HCT116 (cell line): ENCODE measurements at regions of chr2 and their contacts with region 1.

Region 1: GRCh38 chr2:27683390-27684071 is 19.8 kb downstream of the SLC4A1AP start:
- DNase-seq: peak; percentile 96
- ATAC-seq: peak; percentile 86
- H3K4me3 ChIP-seq: peak overlapping the region in 1 of 2 experiments; percentile 40; a peak in 2 of 4 replicates
- H3K27ac ChIP-seq: peak overlapping the region; percentile 70; the same call in 1 of the 2 replicates
- H3K4me1 ChIP-seq: peaks cover 25 to 35% of the 10 kb centered on the region in 2 experiments
- H3K27me3 ChIP-seq: no peaks in the 10 kb centered on the region
- CTCF ChIP-seq: peak; percentile 89 to 100 (median 98)
- POLR2A ChIP-seq: no peak
- RAD21 ChIP-seq: peak; percentile 97

Region 2: GRCh38 chr2:27335311-27335710 is 348.2 kb before region 1 on chr2:
- CTCF ChIA-PET with region 1: no interaction called
- POLR2A ChIA-PET with region 1: no interaction called
- RAD21 ChIA-PET with region 1: no interaction called
- intact Hi-C with region 1: no loop called
- DNase-seq: no peak
- ATAC-seq: no peak
- H3K4me3 ChIP-seq: no peak overlapping the region
- H3K27ac ChIP-seq: no peak overlapping the region
- H3K4me1 ChIP-seq: no peaks in the 10 kb centered on the region
- H3K27me3 ChIP-seq: no peaks in the 10 kb centered on the region
- CTCF ChIP-seq: no peak
- POLR2A ChIP-seq: no peak
- RAD21 ChIP-seq: no peak

Region 3: GRCh38 chr2:27409321-27410073 is 274.0 kb before region 1 on chr2 and contains the start of gene PPM1G:
- CTCF ChIA-PET with region 1: interaction called, 22 read pairs
- POLR2A ChIA-PET with region 1: no interaction called
- RAD21 ChIA-PET with region 1: no interaction called
- intact Hi-C with region 1: loop called (anchors 1 kb)
- DNase-seq: peak; percentile 82
- ATAC-seq: peak; percentile 94
- H3K4me3 ChIP-seq: peak within 1 kb of the TSS; percentile 97 to 98
- H3K27ac ChIP-seq: peak within 1 kb of the TSS; percentile 91
- H3K4me1 ChIP-seq: peaks cover under 1 to 23% of the 10 kb centered on the region in 2 experiments; a peak in 3 of 4 replicates
- H3K27me3 ChIP-seq: no peaks in the 10 kb centered on the region
- CTCF ChIP-seq: no peak
- POLR2A ChIP-seq: peak; percentile 90
- RAD21 ChIP-seq: no peak
- total RNA-seq, gene PPM1G: 140 TPM

Region 4: GRCh38 chr2:27672723-27673486 is 10.6 kb before region 1 on chr2:
- CTCF ChIA-PET with region 1: interaction called, 18 read pairs
- POLR2A ChIA-PET with region 1: interaction called, 3 read pairs
- RAD21 ChIA-PET with region 1: no interaction called
- intact Hi-C with region 1: no loop called
- DNase-seq: no peak
- ATAC-seq: no peak
- H3K4me3 ChIP-seq: no peak overlapping the region
- H3K27ac ChIP-seq: no peak overlapping the region
- H3K4me1 ChIP-seq: no peaks in the 10 kb centered on the region
- H3K27me3 ChIP-seq: no peaks in the 10 kb centered on the region
- CTCF ChIP-seq: no peak
- POLR2A ChIP-seq: no peak
- RAD21 ChIP-seq: no peak

Region 5: GRCh38 chr2:27703638-27704341 is 20.3 kb after region 1 on chr2:
- CTCF ChIA-PET with region 1: interaction called, 22 read pairs
- POLR2A ChIA-PET with region 1: no interaction called
- RAD21 ChIA-PET with region 1: interaction called in 1 of 2 experiments, 5 read pairs
- intact Hi-C with region 1: no loop called
- DNase-seq: peak; percentile 71
- ATAC-seq: peak; percentile 73
- H3K4me3 ChIP-seq: no peak overlapping the region
- H3K27ac ChIP-seq: no peak overlapping the region
- H3K4me1 ChIP-seq: peaks cover 17 to 42% of the 10 kb centered on the region in 2 experiments
- H3K27me3 ChIP-seq: no peaks in the 10 kb centered on the region
- CTCF ChIP-seq: peak; percentile 85 to 95 (median 90)
- POLR2A ChIP-seq: no peak
- RAD21 ChIP-seq: peak; percentile 98

Region 6: DNA sequence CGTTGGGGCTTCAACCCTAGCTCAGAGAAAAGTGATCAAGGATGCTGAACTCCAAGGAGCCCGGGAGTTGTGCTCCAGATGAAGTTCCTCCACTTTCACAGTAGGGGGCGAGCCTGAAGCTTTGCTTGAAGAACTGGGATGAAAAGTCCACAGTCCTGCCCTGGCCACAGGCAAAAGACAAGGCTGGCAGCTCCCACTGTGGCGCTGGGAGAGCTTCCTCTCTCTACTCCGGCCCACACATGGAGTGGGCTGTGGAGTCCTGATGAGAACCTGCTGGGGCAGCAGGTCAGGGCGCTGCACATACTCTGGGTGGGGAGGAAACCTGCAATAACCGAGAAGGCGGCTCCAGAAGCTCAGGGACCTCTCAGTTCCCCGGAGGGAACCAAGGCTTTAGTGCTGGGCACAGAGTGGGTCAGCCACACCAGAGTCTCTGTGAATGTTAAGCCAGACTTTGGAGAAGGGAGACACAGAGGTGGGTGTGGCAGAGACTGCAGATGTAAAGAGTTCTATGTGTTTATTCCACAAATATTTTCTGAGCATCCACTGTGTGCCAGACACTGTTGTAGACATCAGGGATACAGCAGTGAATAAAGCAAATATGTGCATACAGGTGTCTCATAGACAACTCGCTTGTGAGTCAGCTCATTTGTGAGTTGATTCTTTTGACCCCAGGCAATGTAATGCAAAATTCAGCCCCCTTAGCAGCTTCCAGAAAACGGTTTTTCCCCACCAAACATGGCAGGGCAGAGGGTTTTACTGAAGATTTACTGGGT is 40.0 kb after region 1 on chr2:
- CTCF ChIA-PET with region 1: interaction called, 13 read pairs
- POLR2A ChIA-PET with region 1: no interaction called
- RAD21 ChIA-PET with region 1: no interaction called
- intact Hi-C with region 1: no loop called
- DNase-seq: peak; percentile 62
- ATAC-seq: peak; percentile 59
- H3K4me3 ChIP-seq: no peak overlapping the region
- H3K27ac ChIP-seq: no peak overlapping the region
- H3K4me1 ChIP-seq: peaks cover 29 to 60% of the 10 kb centered on the region in 2 experiments
- H3K27me3 ChIP-seq: no peaks in the 10 kb centered on the region
- CTCF ChIP-seq: peak in 2 of 3 experiments; percentile 82 to 88; a peak in 4 of 6 replicates
- POLR2A ChIP-seq: no peak
- RAD21 ChIP-seq: no peak

Region 7: GRCh38 chr2:27929916-27930486 is 246.5 kb after region 1 on chr2:
- CTCF ChIA-PET with region 1: no interaction called
- POLR2A ChIA-PET with region 1: no interaction called
- RAD21 ChIA-PET with region 1: no interaction called
- intact Hi-C with region 1: no loop called
- DNase-seq: no peak
- ATAC-seq: no peak
- H3K4me3 ChIP-seq: no peak overlapping the region
- H3K27ac ChIP-seq: no peak overlapping the region
- H3K4me1 ChIP-seq: peaks cover 12 to 18% of the 10 kb centered on the region in 2 experiments
- H3K27me3 ChIP-seq: no peaks in the 10 kb centered on the region
- CTCF ChIP-seq: no peak
- POLR2A ChIP-seq: no peak
- RAD21 ChIP-seq: no peak

Region 8: GRCh38 chr2:28452534-28453081 is 769.1 kb after region 1 on chr2:
- CTCF ChIA-PET with region 1: interaction called, 5 read pairs
- POLR2A ChIA-PET with region 1: no interaction called
- RAD21 ChIA-PET with region 1: no interaction called
- intact Hi-C with region 1: loop called (anchors 2 kb)
- DNase-seq: peak; percentile 32
- ATAC-seq: peak; percentile 91
- H3K4me3 ChIP-seq: no peak overlapping the region
- H3K27ac ChIP-seq: no peak overlapping the region
- H3K4me1 ChIP-seq: peaks cover 8 to 31% of the 10 kb centered on the region in 2 experiments; a peak in 3 of 4 replicates
- H3K27me3 ChIP-seq: no peaks in the 10 kb centered on the region
- CTCF ChIP-seq: peak; percentile 85 to 98 (median 97)
- POLR2A ChIP-seq: no peak
- RAD21 ChIP-seq: peak; percentile 97